ENCODE measurements at regions of chr7 and their contacts with region 1.

Region 1: DNA sequence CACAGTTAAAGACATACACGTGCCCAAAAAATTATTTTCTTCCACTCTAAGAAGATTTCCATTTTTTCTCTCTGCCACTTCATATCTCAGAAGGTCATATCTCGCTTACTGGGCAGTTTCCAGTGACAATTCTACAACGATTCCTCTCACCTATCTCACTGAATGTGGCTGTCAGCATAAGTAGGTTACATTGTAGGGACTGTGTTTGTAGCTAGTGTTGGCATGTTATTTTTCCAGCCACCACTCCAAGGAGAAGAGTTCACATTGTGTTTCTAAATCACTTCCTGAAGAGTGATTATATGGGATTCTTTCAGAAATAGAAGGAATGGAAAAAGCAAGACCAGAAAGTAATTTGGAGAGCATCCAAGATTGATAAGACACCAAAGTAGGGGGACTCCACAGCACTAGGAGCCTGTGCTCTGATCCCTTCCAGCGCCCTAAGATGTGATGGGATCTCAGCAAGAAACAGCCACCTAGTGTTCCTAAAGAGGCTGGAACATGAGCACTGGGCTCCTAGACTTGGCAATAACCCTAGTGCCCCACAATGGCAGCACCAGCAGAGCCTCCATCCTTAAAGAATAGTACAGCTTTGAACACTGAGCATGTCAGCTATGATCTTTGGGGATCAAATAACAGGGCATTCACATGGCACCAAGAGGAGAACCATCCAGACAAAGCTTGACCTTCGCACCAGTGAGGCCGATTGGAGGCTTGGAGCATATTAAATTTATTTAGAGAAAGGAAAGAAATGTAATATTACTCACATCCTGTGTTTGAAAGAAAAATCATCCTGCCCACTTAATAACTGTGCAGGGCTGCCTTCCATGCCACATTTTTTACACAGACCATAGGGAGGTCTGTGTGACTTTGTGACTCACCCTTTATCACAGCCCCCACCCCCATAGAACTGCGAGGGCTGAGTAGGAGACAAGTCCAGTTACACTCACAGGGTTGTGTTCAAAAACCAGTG is 51.8 kb downstream of the CAV1 start:
- DNase-seq: peak in 1 of 3 donors; percentile 35
- ATAC-seq: peak; percentile 58 to 79
- H3K4me3 ChIP-seq: no peak overlapping the region
- H3K27ac ChIP-seq: peak overlapping the region; percentile 19
- H3K4me1 ChIP-seq: peaks cover 12% of the 10 kb centered on the region
- H3K27me3 ChIP-seq: no peaks in the 10 kb centered on the region

Region 2: DNA sequence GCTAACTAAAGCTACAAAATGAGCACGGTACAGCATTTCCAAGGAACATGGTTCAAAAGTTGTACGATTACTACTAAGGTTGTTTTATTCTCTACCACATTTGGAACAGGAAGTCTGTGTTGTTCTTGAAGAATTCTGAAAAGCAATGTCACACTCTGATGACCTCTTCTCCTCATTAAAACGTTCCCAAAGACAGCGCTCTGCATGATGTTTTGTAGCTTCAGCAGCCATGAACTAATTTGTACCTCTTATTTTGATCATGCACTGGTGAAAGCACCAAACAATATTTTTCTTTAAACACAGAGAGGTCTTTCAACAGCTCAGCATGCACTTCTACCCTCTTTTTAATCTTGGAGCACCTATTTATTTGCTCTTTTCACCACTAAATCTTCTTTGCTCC is 441.3 kb before region 1 on chr7:
- intact Hi-C with region 1: no loop called
- DNase-seq: no peak
- ATAC-seq: no peak
- H3K4me3 ChIP-seq: no peak overlapping the region
- H3K27ac ChIP-seq: no peak overlapping the region
- H3K4me1 ChIP-seq: no peaks in the 10 kb centered on the region
- H3K27me3 ChIP-seq: no peaks in the 10 kb centered on the region

Region 3: GRCh38 chr7:116399819-116400218 is 176.8 kb before region 1 on chr7:
- intact Hi-C with region 1: no loop called
- DNase-seq: no peak
- ATAC-seq: no peak
- H3K4me3 ChIP-seq: no peak overlapping the region
- H3K27ac ChIP-seq: no peak overlapping the region
- H3K4me1 ChIP-seq: peaks cover 4% of the 10 kb centered on the region
- H3K27me3 ChIP-seq: no peaks in the 10 kb centered on the region

Region 4: DNA sequence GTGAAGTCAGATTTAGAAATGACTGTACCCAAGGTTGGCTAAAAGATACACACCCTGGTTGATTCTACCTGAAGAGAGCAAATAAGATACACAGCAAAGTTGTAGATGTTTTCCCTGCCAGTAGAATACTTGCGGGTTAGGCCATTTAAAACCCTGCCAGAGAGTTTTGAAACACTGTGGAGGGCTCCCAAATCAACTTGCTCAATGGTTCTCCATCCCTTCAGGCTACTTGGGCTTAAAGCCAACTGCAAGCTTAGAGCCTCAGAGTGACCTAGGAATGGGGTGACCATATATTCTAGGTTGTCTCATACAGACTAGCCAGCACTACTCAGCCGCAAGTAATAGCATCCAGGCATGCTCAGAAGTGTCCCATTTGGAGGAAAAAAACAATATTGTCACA is 41.8 kb before region 1 on chr7:
- intact Hi-C with region 1: loop called (anchors 2 to 10 kb)
- DNase-seq: no peak
- ATAC-seq: peak; percentile 44 to 65
- H3K4me3 ChIP-seq: no peak overlapping the region
- H3K27ac ChIP-seq: peak overlapping the region; percentile 68
- H3K4me1 ChIP-seq: peaks cover 22% of the 10 kb centered on the region
- H3K27me3 ChIP-seq: no peaks in the 10 kb centered on the region

Region 5: DNA sequence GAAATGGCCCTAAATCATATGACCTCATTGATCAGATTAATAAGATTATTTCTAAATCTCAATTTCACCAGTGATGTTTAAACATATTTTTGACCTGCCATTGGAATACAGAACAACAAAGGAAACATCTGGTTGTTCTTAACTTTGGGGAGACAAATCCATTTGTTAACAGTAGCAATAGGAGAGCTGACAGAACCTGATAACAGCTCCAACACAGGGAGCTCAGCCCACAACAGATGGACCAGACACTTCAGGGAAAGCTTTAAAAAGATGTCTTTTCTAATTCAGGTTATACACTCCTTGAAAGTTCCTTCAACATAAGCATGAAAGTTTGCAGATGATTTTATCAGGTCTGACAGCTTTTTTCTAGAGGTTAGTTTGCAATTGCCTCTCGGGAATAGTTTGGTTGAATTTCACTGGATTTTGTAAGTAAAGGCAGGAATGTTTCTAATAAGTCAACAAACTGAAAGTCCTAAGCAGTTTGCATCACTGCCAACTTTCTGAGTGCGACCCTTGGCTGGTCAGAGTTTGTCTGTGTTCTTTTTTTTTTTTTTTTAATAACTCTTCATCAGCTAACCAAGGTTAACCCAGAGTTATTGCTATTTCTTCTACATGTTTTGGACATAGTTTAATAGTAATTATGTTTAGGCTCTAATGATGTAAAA is 88.8 kb after region 1 on chr7:
- intact Hi-C with region 1: no loop called
- DNase-seq: no peak
- ATAC-seq: no peak
- H3K4me3 ChIP-seq: no peak overlapping the region
- H3K27ac ChIP-seq: no peak overlapping the region
- H3K4me1 ChIP-seq: no peaks in the 10 kb centered on the region
- H3K27me3 ChIP-seq: no peaks in the 10 kb centered on the region